ENCODE measurements at regions of chr11 and their contacts with region 1.

Region 1: GRCh38 chr11:16945671-16946469 is 68.3 kb downstream of the PLEKHA7 start:
- DNase-seq: peak; percentile 46
- ATAC-seq: peak; percentile 75 to 89

Region 2: GRCh38 chr11:16785520-16786128 is 160.2 kb before region 1 on chr11:
- intact Hi-C with region 1: loop called in 1 of 2 experiments (anchors 5 kb)
- DNase-seq: peak; percentile 66
- ATAC-seq: peak; percentile 62 to 76

Region 3: GRCh38 chr11:16853859-16854258 is 92.0 kb before region 1 on chr11:
- intact Hi-C with region 1: loop called in 1 of 2 experiments (anchors 5 kb)
- DNase-seq: no peak
- ATAC-seq: peak; percentile 20 to 45

Region 4: GRCh38 chr11:16902781-16903378 is 43.0 kb before region 1 on chr11:
- intact Hi-C with region 1: no loop called
- DNase-seq: no peak
- ATAC-seq: no peak

Region 5: DNA sequence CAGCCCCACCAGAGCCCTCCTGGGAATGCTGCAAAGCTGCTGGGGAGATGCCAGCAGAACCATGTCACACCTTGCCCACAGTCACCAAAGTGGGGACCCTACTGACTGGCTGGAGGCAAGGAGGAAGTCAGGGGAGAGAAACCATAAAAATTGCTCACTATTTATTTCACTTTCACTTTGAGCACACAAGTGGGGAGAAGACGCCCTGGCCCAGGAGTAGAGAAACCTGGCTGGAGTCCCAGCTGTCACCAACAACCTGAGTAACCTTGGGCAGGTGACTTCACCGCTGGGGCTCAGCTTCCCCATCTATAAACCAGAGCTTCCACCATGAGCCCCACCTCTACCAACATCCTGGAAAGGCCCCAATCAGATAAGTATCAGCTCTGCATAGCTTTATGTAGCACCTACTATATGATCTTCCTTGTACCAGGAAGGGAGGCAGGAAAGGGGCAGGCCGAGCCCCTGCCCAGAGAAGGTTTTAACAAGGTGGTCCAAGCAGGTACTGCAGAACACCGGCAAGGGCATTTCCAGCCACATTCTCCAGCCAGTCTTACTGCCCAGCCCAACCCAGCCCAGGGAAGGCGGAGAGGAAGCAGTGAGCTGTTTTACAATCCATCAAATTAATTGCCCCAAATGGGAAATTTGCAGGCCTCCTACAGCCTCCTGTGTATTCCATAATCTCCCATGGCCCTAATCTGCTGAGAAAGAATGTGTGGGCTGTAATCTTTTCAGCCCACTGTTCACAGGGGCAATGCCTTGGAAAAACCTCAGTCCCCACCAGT is 40.8 kb after region 1 on chr11:
- intact Hi-C with region 1: no loop called
- DNase-seq: no peak
- ATAC-seq: peak; percentile 21 to 39

Region 6: GRCh38 chr11:17014838-17015626 is 69.2 kb after region 1 on chr11:
- intact Hi-C with region 1: loop called in 1 of 2 experiments (anchors 5 kb)
- DNase-seq: peak; percentile 23
- ATAC-seq: peak in 1 of 2 donors; percentile 5

Region 7: DNA sequence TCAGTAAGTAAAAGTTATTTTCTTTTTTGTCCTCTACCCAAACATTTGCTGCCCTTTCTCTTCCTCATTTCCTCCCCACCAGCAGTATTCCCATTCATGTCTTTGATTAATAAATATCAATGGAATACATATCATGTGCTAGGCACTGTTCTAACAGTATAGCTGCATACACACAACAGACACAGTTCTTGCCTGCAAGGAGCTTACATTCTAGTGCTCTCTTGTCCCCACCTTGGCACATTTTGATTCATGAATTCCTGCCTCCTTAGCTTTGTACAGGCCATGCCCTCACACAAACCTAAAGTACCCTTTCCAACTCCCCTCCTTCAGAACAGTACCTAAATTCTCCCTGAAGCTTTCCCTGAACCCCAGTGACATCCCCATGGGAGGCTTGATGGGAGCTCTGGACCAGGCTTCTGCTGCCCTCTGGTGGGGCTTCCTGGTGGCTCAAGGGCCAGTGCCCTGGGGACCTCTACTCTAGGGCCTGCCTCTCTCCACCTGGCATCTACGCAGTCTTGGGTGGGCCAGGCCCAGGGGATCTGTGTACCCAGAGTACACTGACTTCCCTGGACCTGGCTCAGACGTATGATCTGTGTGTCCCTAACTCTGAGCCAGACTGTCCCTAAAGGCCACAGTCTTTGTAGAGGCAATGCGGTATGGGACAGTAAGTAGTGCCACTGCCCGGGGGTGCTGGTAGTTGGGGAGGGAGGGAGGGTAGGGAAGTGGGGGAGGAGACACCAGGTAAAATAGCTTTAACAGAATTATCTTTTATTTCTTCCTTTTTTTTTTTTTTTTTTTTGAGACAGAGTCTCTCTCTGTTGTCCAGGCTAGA is 117.5 kb after region 1 on chr11:
- intact Hi-C with region 1: loop called (anchors 1 to 5 kb)
- DNase-seq: peak; percentile 62
- ATAC-seq: peak; percentile 94 to 95